Ovary (tissue), 10 donors: ENCODE measurements at regions of chr2 and their contacts with region 1.

Region 1: DNA sequence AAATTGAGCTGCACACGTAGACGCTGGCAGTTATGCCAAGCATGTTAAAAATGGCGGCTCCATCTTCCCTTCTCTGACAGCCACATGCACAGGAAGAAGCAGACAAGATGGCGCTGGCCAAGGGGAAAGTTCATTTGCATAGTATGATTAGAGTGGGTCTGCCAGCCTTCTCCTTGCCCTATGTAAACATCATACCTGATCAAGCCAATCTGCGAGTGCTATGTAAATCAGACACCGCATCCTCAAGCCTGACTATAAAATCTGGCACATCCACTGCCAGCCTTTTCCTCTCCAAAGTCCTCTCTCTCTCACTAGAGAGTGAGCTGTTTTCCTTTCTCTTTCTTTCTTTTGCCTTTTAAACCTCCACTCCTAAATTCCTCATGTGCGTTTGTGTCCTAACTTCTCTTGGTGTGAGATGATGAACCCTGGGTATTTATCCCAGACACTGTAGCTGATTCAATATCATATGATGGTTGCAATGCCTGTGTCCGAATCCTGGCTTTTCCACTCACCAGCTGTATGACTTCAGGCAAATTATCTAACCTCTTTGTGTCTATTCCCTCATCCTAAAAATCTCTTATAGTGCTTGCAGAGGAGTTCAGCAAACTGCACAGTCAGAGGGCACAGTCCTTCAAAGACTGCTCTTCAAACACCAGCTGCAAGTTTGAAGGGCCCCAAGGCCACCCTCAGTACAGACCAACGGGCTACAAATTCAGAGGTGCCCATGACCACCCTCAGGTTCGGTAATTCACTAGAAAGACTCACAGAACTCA is 39.3 kb upstream of the ITSN2 start:
- DNase-seq: no peak
- H3K4me3 ChIP-seq: no peak overlapping the region
- H3K27ac ChIP-seq: no peak overlapping the region
- H3K4me1 ChIP-seq: peaks cover 5% of the 10 kb centered on the region
- H3K27me3 ChIP-seq: no peaks in the 10 kb centered on the region
- CTCF ChIP-seq: no peak
- EP300 ChIP-seq: no peak
- POLR2A ChIP-seq: no peak

Region 2: DNA sequence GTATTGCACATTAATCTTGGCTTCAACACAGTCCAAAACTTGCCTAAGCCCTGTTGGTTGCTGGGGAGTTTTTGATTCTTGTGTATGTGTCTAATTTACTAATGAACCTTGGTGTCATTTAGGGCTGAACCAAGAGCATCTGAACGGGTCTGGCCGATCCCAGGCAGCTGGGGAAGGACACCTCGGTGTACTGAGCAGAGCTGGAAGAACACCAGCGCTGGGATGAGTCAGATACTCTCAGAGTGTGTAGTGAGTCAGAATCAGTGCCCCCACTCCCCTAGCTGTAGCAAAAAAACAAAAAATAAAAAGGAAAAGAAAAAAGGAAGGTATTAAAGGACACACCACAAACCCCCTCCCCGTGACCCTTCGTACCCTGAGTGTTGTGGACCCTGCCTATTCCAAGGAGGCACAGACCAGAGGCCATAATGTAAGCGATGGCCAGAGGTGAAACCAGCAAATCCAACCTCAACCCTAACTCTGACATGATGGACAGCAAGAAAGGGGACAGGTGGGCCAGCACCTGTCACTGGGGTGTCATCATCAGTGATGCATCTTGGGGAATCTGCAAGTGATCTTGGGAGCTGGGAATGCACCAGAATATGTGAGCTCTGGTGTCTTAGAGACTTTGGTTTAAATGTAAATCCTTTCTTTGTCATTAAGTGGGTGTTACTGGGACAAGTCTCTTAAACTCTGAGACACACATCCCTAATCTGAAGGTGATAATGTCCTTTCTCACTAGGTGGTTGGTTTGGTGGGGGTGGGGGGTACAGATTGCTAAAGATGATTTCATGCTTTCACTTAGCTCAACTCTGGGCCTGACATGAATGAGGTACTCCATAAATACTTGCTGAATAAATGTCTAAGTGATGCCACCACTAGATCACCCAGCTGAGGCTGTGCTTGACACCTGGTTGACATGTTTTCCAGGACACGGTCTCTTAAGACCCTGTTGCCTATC is 57.3 kb after region 1 on chr2:
- intact Hi-C with region 1: no loop called
- DNase-seq: peak; percentile 76 to 89 (median 80)
- H3K4me3 ChIP-seq: no peak overlapping the region
- H3K27ac ChIP-seq: no peak overlapping the region
- H3K4me1 ChIP-seq: no peaks in the 10 kb centered on the region
- H3K27me3 ChIP-seq: no peaks in the 10 kb centered on the region
- CTCF ChIP-seq: no peak
- EP300 ChIP-seq: no peak
- POLR2A ChIP-seq: no peak

Region 3: DNA sequence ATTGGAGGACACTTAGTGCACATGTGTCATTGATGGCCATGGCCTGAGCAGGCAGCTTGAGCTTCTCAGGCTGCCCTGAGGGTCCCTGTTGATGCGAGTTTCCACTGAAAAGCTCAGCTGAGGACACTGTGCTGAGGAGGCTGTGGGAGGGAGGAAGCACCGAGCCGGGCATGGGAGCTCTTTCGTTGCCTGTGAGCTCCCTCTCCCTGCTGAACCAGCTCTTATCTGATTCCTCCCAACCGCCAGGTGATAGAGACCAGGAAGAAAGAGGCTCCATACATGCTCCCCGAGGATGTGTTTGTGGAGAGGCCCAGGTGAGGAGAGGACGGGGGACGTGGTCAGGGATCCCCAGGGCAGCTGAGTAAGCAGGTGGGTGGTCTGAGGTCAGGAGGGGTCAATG is 741.5 kb after region 1 on chr2:
- intact Hi-C with region 1: loop called in 1 of 4 experiments (anchors 5 kb)
- DNase-seq: no peak
- H3K4me3 ChIP-seq: no peak overlapping the region
- H3K27ac ChIP-seq: no peak overlapping the region
- H3K4me1 ChIP-seq: no peaks in the 10 kb centered on the region
- H3K27me3 ChIP-seq: no peaks in the 10 kb centered on the region
- CTCF ChIP-seq: no peak
- EP300 ChIP-seq: no peak
- POLR2A ChIP-seq: no peak